HepG2 (cell line): ENCODE measurements at regions of chr9 and their contacts with region 1.

Region 1: DNA sequence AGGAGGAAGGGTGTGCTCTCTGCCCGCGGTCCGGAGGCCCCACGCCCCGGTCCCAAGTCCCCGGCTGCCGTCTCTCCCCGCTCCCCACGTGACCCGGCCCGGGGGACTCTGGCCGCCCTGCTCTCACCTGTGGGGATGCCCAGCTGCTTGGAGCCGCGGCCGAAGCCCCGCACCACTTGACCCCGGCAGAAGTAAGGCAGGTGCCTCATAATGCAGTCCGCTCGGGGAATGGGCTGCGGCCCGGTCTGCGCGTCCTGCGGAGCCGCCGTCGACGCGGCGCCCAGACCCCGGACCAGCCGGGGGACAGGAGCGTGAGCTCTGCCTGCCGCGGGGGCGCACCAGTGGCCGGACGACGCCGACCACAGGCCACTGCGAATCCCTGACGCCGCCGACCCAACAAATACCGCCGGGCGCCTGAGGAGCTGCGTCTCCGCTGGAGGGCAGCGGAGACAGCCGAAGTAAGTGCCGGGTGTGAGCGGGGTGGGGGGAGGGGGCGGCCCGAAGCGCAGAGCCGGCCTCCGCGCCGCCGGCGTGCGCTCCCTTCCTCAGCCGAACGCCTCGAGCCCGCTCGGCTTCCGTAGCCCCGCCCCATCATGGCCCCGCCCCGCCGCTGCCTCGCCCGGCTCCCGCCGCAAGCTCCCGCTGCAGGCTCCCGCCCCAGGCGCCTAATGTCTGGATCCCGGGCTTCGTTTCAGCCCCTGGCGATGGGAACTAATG is at the start of gene RFK:
- DNase-seq: peak; percentile 85
- ATAC-seq: peak; percentile 88
- H3K4me3 ChIP-seq: peak within 1 kb of the TSS; percentile 60 to 83 (median 74)
- H3K27ac ChIP-seq: peak within 1 kb of the TSS; percentile 96
- H3K4me1 ChIP-seq: peaks cover 47% of the 10 kb centered on the region
- H3K27me3 ChIP-seq: no peaks in the 10 kb centered on the region
- CTCF ChIP-seq: peak; percentile 87
- EP300 ChIP-seq: peak in 1 of 2 experiments; percentile 25; a peak in 1 of 4 replicates
- POLR2A ChIP-seq: peak in 1 of 2 experiments; percentile 60; a peak in 3 of 4 replicates
- RAD21 ChIP-seq: peak; percentile 97
- total RNA-seq, gene RFK: 37.2 and 56.5 TPM in 2 replicates

Region 2: GRCh38 chr9:76044266-76044819 is 349.8 kb before region 1 on chr9:
- CTCF ChIA-PET with region 1: no interaction called
- POLR2A ChIA-PET with region 1: no interaction called
- in situ Hi-C with region 1: no loop called
- intact Hi-C with region 1: no loop called
- DNase-seq: no peak
- ATAC-seq: no peak
- H3K4me3 ChIP-seq: no peak overlapping the region
- H3K27ac ChIP-seq: no peak overlapping the region
- H3K4me1 ChIP-seq: peaks cover 4% of the 10 kb centered on the region; the same call in 1 of the 2 replicates
- H3K27me3 ChIP-seq: no peaks in the 10 kb centered on the region
- CTCF ChIP-seq: no peak
- EP300 ChIP-seq: no peak
- POLR2A ChIP-seq: no peak
- RAD21 ChIP-seq: no peak

Region 3: DNA sequence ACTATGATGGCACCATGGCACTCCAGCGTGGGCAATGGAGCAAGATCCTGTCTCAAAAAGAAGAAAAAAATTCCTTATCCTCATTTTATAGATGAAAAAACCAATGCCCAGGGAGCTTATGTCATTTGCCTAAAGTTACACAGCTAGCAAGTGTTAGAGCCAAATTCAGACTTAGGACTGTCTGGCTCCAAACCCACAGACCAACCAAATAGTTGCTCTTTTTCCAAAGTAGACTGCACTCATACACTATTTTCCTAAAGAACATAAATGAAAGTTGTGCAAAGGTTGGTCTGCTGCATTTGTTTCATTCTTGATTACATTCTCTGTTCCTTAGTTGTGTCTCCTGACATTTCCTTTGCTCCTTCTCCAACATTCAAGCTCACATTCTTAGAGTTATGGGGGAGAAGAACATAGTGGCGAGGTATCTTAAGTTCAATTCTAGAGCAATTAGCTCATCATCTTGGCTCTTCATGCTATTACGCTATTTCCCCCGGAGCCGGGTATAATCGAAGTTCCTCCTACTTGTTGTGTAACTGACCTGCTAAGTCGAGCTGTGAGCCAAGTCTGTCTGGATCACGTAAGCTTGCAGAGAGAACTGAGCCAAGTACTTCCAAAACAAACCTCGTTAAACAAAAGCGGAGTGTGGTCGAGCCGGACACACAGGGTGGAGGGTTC is 138.2 kb before region 1 on chr9:
- CTCF ChIA-PET with region 1: no interaction called
- POLR2A ChIA-PET with region 1: no interaction called
- in situ Hi-C with region 1: no loop called
- intact Hi-C with region 1: no loop called
- DNase-seq: no peak
- ATAC-seq: no peak
- H3K4me3 ChIP-seq: no peak overlapping the region
- H3K27ac ChIP-seq: no peak overlapping the region
- H3K4me1 ChIP-seq: no peaks in the 10 kb centered on the region
- H3K27me3 ChIP-seq: 0 out of 5 replicates have a peak, but pooled peaks cover 0 to 4% of the 10 kb centered on the region in 2 experiments
- CTCF ChIP-seq: no peak
- EP300 ChIP-seq: no peak
- POLR2A ChIP-seq: no peak
- RAD21 ChIP-seq: no peak

Region 4: DNA sequence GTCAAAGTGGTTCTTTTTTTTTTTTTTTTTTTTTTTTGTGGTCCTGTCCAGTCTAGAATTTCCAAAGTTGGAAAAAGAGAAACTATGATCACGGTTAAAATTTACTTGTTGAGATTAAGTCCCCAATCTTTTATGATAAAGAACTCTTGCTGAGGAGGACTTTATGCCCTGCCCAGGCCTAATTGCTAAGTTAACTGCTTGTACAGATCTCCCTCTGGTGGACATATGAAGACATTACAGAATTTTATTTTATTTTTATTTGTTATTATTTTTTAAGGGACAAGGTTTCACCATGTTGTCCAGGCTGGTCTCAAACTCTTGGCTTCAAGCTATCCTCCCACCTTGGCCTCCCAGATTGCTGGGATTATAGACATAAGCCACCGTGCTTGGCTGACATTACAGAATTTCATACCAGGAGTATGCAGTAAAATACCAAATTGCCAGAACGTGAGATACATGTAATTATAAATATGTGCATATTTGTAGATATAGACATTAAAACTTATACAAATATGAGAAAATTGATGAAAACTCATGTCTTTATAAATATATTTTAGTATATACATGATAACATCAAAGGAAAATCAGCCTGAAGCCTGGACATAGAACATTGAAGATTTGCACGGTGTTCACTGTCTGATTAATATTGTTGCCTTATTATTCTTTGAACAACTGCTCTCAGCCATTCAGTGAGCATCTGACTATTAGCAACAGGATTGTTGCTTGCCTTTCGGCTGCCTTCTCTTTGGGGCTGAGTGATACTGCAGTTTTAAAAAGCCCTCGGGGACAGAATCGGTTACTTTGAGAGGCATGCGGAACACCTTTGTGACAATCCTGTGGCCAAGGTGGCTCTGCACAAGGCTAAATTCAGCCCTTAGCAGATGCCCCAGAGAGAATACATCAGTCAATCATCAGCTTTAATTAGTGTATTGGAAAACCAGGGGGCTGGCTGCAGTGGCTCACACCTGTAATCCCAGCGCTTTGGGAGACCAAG is 90.9 kb before region 1 on chr9:
- CTCF ChIA-PET with region 1: no interaction called
- POLR2A ChIA-PET with region 1: no interaction called
- in situ Hi-C with region 1: no loop called
- intact Hi-C with region 1: no loop called
- DNase-seq: peak; percentile 37
- ATAC-seq: peak; percentile 47; the same call in 2 of the 3 replicates
- H3K4me3 ChIP-seq: no peak overlapping the region
- H3K27ac ChIP-seq: no peak overlapping the region
- H3K4me1 ChIP-seq: no peaks in the 10 kb centered on the region
- H3K27me3 ChIP-seq: no peaks in the 10 kb centered on the region
- CTCF ChIP-seq: peak; percentile 55
- EP300 ChIP-seq: no peak
- POLR2A ChIP-seq: no peak
- RAD21 ChIP-seq: no peak

Region 5: GRCh38 chr9:76316069-76316468 is 78.1 kb before region 1 on chr9:
- CTCF ChIA-PET with region 1: no interaction called
- POLR2A ChIA-PET with region 1: no interaction called
- in situ Hi-C with region 1: no loop called
- intact Hi-C with region 1: loop called (anchors 5 kb)
- DNase-seq: no peak
- ATAC-seq: no peak
- H3K4me3 ChIP-seq: no peak overlapping the region
- H3K27ac ChIP-seq: no peak overlapping the region
- H3K4me1 ChIP-seq: no peaks in the 10 kb centered on the region
- H3K27me3 ChIP-seq: no peaks in the 10 kb centered on the region
- CTCF ChIP-seq: no peak
- EP300 ChIP-seq: no peak
- POLR2A ChIP-seq: no peak
- RAD21 ChIP-seq: no peak

Region 6: DNA sequence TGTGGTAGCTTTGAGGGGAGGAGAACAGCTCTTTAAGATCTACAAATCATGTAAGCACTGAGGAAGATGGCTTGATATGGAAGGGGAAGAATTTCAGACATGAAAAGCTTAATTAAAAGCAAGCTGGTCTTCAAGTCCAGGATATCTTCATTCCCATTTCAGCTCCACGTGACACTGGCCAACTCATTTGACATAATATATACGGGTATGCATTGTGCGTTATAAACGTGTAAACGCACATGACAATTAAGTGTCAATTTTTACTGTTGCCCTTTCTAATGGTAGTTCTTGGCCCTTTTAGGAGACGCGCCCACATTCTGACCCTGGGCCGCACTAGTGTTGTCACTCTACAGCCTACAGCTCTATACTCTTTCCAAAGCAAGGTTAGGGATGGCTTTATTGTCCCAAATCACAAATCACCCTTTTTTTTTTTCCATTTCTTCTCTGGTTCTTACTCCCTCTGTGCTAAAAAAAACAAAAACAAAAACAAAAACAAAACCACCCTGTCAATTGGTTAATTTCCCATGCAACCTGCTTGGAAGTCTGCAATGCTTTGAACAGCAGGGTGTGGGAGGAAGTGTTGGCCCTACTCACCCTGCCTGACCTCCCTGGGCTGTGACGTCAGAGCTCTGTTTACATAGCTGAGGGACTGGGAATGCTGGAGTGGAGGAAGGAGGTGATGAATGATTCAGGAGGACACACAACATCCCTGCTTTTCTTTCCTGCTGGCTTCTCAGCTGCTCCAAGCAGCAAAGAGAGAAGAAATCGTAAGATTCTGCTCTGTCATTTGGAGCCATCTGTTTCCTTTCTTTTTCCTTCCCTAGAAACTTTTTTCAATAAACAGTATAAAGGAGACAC is 19.2 kb before region 1 on chr9:
- CTCF ChIA-PET with region 1: no interaction called
- POLR2A ChIA-PET with region 1: interaction called, 18 read pairs
- in situ Hi-C with region 1: no loop called
- intact Hi-C with region 1: no loop called
- DNase-seq: peak; percentile 85
- ATAC-seq: peak; percentile 71
- H3K4me3 ChIP-seq: no peak overlapping the region
- H3K27ac ChIP-seq: no peak overlapping the region
- H3K4me1 ChIP-seq: peaks cover 42% of the 10 kb centered on the region
- H3K27me3 ChIP-seq: no peaks in the 10 kb centered on the region
- CTCF ChIP-seq: no peak
- EP300 ChIP-seq: peak in 1 of 2 experiments; percentile 7; a peak in 1 of 4 replicates
- POLR2A ChIP-seq: no peak
- RAD21 ChIP-seq: no peak

Region 7: GRCh38 chr9:76419782-76420380 is 25.8 kb after region 1 on chr9:
- CTCF ChIA-PET with region 1: no interaction called
- POLR2A ChIA-PET with region 1: interaction called, 7 read pairs
- in situ Hi-C with region 1: no loop called
- intact Hi-C with region 1: loop called (anchors 1 kb)
- DNase-seq: peak; percentile 36
- ATAC-seq: peak; percentile 52; the same call in 2 of the 3 replicates
- H3K4me3 ChIP-seq: no peak overlapping the region
- H3K27ac ChIP-seq: no peak overlapping the region
- H3K4me1 ChIP-seq: peaks cover 80% of the 10 kb centered on the region
- H3K27me3 ChIP-seq: no peaks in the 10 kb centered on the region
- CTCF ChIP-seq: peak; percentile 58
- EP300 ChIP-seq: no peak
- POLR2A ChIP-seq: no peak
- RAD21 ChIP-seq: no peak

Region 8: GRCh38 chr9:76458903-76459690 is 65.0 kb after region 1 on chr9 and contains the start of gene GCNT1:
- CTCF ChIA-PET with region 1: no interaction called
- POLR2A ChIA-PET with region 1: interaction called, 10 read pairs
- in situ Hi-C with region 1: no loop called
- intact Hi-C with region 1: loop called (anchors 2 kb)
- DNase-seq: peak; percentile 71
- ATAC-seq: peak; percentile 90
- H3K4me3 ChIP-seq: peak within 1 kb of the TSS; percentile 49 to 74 (median 71)
- H3K27ac ChIP-seq: no peak within 1 kb of the TSS
- H3K4me1 ChIP-seq: peaks cover 40% of the 10 kb centered on the region
- H3K27me3 ChIP-seq: peaks cover 0 to 19% of the 10 kb centered on the region in 2 experiments; a peak in 1 of 5 replicates
- CTCF ChIP-seq: peak; percentile 83
- EP300 ChIP-seq: no peak
- POLR2A ChIP-seq: 0 out of 4 replicates have a peak, but pooled peaks of 1 of the 2 experiments have one; percentile 16
- RAD21 ChIP-seq: 0 out of 2 replicates have a peak, but pooled peaks have one; percentile 34
- total RNA-seq, gene GCNT1: 0.18 and 0.55 TPM in 2 replicates

Region 9: DNA sequence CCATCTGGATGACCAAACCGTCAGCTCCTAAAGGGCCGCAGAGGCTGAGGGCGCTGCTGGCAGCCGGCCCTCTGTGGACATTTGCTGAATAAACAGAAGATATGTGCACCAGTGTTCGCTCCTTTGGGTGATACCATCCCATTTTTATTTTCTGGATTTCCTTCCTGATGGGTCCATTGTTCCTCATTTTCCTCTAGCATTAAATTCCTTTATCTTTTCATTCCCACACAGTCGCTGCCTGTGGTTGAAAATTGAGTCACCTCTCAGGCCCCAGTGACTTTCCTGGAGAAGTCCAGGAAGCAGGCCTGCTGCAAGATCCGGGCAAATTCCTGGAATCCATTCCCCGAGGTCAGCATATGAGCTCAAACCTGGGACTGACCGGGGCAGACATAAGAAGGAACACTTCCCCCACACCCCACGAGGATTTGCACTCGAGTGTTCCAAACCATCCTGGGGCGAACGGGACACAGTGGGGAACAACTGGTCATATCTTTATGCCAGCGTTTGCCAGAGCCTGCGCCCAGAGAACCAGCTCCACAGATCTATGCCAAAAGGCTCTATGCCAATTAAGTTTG is 283.4 kb after region 1 on chr9:
- CTCF ChIA-PET with region 1: no interaction called
- POLR2A ChIA-PET with region 1: no interaction called
- in situ Hi-C with region 1: no loop called
- intact Hi-C with region 1: no loop called
- DNase-seq: no peak
- ATAC-seq: peak; percentile 62; the same call in 2 of the 3 replicates
- H3K4me3 ChIP-seq: no peak overlapping the region
- H3K27ac ChIP-seq: no peak overlapping the region
- H3K4me1 ChIP-seq: no peaks in the 10 kb centered on the region
- H3K27me3 ChIP-seq: no peaks in the 10 kb centered on the region
- CTCF ChIP-seq: no peak
- EP300 ChIP-seq: no peak
- POLR2A ChIP-seq: no peak
- RAD21 ChIP-seq: no peak